Right ventricle myocardium inferior (tissue), 1 donor: ENCODE measurements at regions of chr20 and their contacts with region 1.

Region 1: GRCh38 chr20:11274141-11274594 is 600.4 kb upstream of the JAG1 start:
- DNase-seq: no peak
- ATAC-seq: peak; percentile 78

Region 2: DNA sequence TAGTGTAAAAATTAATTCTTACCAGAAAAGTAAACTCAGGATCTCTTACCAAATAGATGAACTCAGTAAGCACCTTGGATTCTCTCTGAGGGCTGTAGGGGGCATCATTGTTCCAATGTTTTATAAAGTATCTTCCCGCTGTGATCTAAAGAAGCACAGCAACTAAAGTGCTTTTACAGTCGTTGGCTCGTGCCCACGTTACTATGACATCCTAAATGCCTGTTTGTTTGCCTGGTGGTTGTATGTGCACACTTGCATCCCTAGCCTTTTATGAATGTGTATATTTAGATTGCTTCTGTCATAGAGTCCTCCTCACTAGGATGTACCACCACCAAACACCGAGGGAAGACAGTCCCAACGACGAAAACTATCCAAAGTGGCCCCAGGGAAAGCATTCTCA is 804.6 kb before region 1 on chr20:
- intact Hi-C with region 1: loop called (anchors 2 kb)
- DNase-seq: no peak
- ATAC-seq: peak; percentile 74

Region 3: DNA sequence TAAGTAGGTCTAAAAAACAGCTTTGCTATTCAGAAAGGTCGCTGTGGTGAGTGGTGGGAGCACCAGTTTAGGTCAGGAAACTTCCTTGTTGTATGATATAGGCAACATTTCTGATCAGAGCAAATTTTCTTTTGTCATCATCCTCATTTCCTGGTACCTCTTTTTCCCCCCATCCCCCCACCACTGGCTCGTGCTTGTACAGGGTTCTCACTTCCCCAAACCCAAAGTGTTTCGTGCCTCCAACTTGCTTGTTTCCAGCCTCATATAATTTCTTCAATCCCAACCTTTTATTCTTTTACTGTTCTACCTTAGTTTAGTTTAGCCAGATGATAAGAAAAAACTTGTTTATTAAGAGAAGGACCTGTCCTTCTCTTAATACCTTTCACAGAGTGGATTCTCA is 391.0 kb before region 1 on chr20:
- intact Hi-C with region 1: no loop called
- DNase-seq: no peak
- ATAC-seq: no peak

Region 4: GRCh38 chr20:11260611-11261010 is 13.6 kb before region 1 on chr20:
- intact Hi-C with region 1: no loop called
- DNase-seq: no peak
- ATAC-seq: no peak

Region 5: DNA sequence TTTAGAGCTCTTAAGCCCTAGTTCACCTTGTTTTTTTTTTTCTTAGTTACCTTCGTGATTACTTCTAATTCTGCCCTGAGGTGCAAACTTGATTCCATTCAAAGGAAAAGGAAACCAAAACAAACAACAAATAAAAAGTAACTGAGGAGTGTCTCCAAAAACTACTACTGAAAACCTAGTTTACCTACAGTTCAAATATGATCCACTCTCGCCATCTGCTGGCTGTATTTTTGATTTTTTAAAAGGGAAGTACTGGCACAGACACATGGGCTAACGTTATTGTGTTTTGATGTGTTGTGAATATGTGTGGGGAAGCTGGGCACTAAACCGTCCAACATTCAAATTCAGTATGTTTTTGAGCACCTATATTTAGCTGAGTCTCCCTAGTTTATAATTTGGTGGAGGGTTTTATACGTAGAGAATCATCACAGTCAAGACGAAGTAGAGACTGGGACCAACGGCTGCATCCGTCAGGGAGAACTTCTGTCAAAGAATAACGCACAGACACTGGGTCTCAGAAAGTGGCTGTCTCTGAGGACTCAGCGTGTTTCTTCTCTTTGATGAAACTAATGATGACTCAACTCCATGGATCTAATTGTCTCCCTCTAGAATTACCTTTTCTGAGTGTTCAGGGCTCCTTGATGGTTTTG is 270.0 kb after region 1 on chr20:
- intact Hi-C with region 1: loop called (anchors 5 kb)
- DNase-seq: no peak
- ATAC-seq: no peak